Activated CD4-positive, alpha-beta memory T cell treated with anti-CD3 and anti-CD28 coated beads for 36 hours (primary cell): ENCODE measurements at regions of chr5 and their contacts with region 1.

Region 1: GRCh38 chr5:94849821-94850736 is 231.6 kb downstream of the SLF1 start:
- DNase-seq: peak; percentile 17
- H3K4me3 Mint-ChIP-seq: no peak overlapping the region
- H3K27ac Mint-ChIP-seq: no peak overlapping the region
- H3K4me1 Mint-ChIP-seq: peaks cover 7% of the 10 kb centered on the region
- H3K27me3 Mint-ChIP-seq: peaks cover 1% of the 10 kb centered on the region

Region 2: GRCh38 chr5:94613583-94613982 is 236.5 kb before region 1 on chr5:
- CTCF ChIA-PET with region 1: interaction called, 4 read pairs
- POLR2A ChIA-PET with region 1: no interaction called
- intact Hi-C with region 1: loop called (anchors 1 kb)
- DNase-seq: no peak
- H3K4me3 Mint-ChIP-seq: no peak overlapping the region
- H3K27ac Mint-ChIP-seq: no peak overlapping the region
- H3K4me1 Mint-ChIP-seq: peaks cover 22% of the 10 kb centered on the region
- H3K27me3 Mint-ChIP-seq: no peaks in the 10 kb centered on the region

Region 3: DNA sequence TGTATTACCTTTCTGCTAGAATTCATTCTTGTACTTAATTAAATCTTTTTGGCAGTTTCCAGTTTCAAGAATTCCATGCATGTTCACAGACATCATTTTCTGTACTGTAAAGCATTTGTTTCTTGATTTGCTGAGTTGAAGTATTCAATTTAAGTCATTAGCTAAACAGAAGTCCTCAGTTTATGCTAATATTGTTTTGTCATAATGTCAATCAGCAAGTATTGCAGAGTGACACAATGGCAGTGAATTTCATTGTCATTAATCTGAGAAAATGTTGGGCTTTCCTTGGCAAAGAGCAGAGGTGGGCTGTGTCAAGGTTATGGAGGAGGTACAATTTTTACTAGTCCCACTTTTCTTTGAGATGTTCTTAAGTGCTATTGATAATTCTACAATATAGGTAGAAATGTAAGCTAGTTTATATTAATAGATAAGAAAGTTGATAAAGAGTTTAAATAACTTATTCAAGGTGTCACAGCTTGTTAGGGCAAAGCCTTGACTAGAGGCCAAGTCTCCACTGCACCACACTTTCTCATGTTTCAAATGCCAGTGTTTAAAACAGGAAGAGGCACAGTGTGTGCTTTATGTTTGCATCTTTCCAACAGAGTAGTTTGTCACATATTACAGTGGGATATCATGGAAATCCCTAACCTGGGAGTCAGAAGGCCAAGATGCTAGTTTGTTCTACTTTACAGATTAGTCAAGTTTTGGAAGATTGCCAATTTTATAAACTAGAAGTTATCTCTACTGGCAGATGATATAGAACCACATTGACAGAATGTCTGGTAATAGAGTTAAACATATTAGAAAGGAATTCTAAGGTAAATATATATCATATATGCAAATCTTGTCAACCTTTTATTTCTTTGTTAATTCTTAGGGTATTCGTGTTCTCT is 175.3 kb before region 1 on chr5:
- CTCF ChIA-PET with region 1: no interaction called
- POLR2A ChIA-PET with region 1: no interaction called
- intact Hi-C with region 1: no loop called
- DNase-seq: no peak
- H3K4me3 Mint-ChIP-seq: no peak overlapping the region
- H3K27ac Mint-ChIP-seq: no peak overlapping the region
- H3K4me1 Mint-ChIP-seq: no peaks in the 10 kb centered on the region
- H3K27me3 Mint-ChIP-seq: no peaks in the 10 kb centered on the region

Region 4: DNA sequence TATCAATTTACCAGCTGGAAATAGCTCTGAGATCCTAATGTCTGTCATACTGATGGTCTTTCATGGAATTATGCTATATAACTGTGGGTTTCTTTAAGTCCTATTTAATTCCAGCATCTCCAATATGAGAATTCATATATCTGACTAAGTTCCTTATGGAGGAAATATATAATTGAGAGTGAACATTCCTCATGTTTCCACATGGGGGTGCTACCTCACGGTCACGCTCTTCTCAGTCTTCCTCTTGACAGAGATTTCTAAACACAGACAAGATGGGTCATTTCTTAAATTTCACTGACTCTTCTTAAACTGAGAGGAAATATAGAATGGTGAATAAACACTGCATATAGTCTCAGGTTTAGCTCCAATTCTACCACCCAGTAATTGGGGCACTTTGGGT is 19.6 kb before region 1 on chr5:
- CTCF ChIA-PET with region 1: interaction called, 6 read pairs
- POLR2A ChIA-PET with region 1: no interaction called
- intact Hi-C with region 1: loop called (anchors 2 kb)
- DNase-seq: no peak
- H3K4me3 Mint-ChIP-seq: no peak overlapping the region
- H3K27ac Mint-ChIP-seq: no peak overlapping the region
- H3K4me1 Mint-ChIP-seq: no peaks in the 10 kb centered on the region
- H3K27me3 Mint-ChIP-seq: peaks cover 25% of the 10 kb centered on the region